ENCODE measurements at regions of chr10 and their contacts with region 1.

Region 1: GRCh38 chr10:72079356-72079755 is 9.0 kb downstream of the SPOCK2 start:
- DNase-seq: peak in 1 of 2 experiments; percentile 25
- H3K4me3 ChIP-seq: no peak overlapping the region
- H3K27ac ChIP-seq: peak overlapping the region; percentile 86
- H3K4me1 ChIP-seq: peaks cover 54% of the 10 kb centered on the region
- H3K27me3 ChIP-seq: no peaks in the 10 kb centered on the region
- CTCF ChIP-seq: no peak

Region 2: GRCh38 chr10:71766702-71767419 is 312.5 kb before region 1 on chr10:
- CTCF ChIA-PET with region 1: no interaction called
- POLR2A ChIA-PET with region 1: no interaction called
- intact Hi-C with region 1: loop called (anchors 1 kb)
- DNase-seq: peak; percentile 95 to 99
- H3K4me3 ChIP-seq: peak overlapping the region; percentile 28; the same call in 1 of the 2 replicates
- H3K27ac ChIP-seq: peak overlapping the region; percentile 88
- H3K4me1 ChIP-seq: peaks cover 91% of the 10 kb centered on the region
- H3K27me3 ChIP-seq: no peaks in the 10 kb centered on the region
- CTCF ChIP-seq: no peak

Region 3: GRCh38 chr10:71963756-71964668 is 115.3 kb before region 1 on chr10 and contains the start of gene CHST3:
- CTCF ChIA-PET with region 1: interaction called, 11 read pairs
- POLR2A ChIA-PET with region 1: no interaction called
- intact Hi-C with region 1: no loop called
- DNase-seq: peak in 1 of 2 experiments; percentile 58
- H3K4me3 ChIP-seq: peak within 1 kb of the TSS; percentile 74
- H3K27ac ChIP-seq: no peak within 1 kb of the TSS
- H3K4me1 ChIP-seq: peaks cover 41% of the 10 kb centered on the region
- H3K27me3 ChIP-seq: no peaks in the 10 kb centered on the region
- CTCF ChIP-seq: no peak
- total RNA-seq, gene CHST3: 21.3 and 23.3 TPM in 2 replicates

Region 4: DNA sequence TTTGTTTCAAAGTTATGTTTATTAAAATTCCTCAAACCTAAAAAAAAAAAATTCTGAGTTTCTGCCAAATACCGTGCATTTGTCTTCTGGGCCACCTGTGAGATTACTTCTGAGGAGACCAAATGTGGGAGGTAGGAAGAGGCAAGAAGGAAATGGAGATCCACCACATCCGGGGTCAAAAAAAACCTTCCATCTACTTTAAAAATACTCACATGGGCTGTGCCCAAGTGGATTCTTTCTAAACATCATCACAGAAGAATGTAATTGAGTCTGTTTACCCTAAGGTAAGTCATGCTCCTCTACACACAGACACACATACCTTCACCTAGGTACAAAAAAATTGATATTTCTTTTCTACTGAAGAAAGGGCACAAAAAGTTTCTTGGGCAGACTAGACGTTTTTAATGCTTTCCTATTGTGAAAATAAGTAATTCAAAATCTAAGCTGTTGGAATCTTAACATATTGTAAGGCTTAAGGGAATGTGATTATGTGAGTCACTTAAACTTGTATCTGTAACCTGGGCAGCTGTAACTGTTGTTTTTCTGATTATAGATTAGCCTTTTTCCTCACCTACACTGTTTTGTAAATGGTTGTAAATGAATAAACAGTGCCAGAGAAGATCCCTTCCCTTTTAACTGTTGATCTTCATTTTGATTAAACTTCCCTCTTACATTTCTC is 28.1 kb after region 1 on chr10:
- CTCF ChIA-PET with region 1: no interaction called
- POLR2A ChIA-PET with region 1: interaction called, 4 read pairs
- intact Hi-C with region 1: loop called (anchors 1 kb)
- DNase-seq: peak; percentile 68 to 98
- H3K4me3 ChIP-seq: peak overlapping the region; percentile 10; the same call in 1 of the 2 replicates
- H3K27ac ChIP-seq: peak overlapping the region; percentile 88
- H3K4me1 ChIP-seq: peaks cover 60% of the 10 kb centered on the region
- H3K27me3 ChIP-seq: no peaks in the 10 kb centered on the region
- CTCF ChIP-seq: no peak

Region 5: GRCh38 chr10:72173635-72174296 is 94.4 kb after region 1 on chr10:
- CTCF ChIA-PET with region 1: interaction called, 6 read pairs
- POLR2A ChIA-PET with region 1: no interaction called
- intact Hi-C with region 1: loop called (anchors 1 kb)
- DNase-seq: peak in 1 of 2 experiments; percentile 48
- H3K4me3 ChIP-seq: no peak overlapping the region
- H3K27ac ChIP-seq: peak overlapping the region; percentile 43
- H3K4me1 ChIP-seq: peaks cover 61% of the 10 kb centered on the region
- H3K27me3 ChIP-seq: no peaks in the 10 kb centered on the region
- CTCF ChIP-seq: no peak

Region 6: GRCh38 chr10:72260588-72261322 is 181.4 kb after region 1 on chr10:
- CTCF ChIA-PET with region 1: no interaction called
- POLR2A ChIA-PET with region 1: no interaction called
- intact Hi-C with region 1: loop called (anchors 2 kb)
- DNase-seq: peak; percentile 97 to 98
- H3K4me3 ChIP-seq: peak overlapping the region; percentile 63
- H3K27ac ChIP-seq: peak overlapping the region; percentile 97
- H3K4me1 ChIP-seq: peaks cover 76% of the 10 kb centered on the region
- H3K27me3 ChIP-seq: no peaks in the 10 kb centered on the region
- CTCF ChIP-seq: no peak

Region 7: DNA sequence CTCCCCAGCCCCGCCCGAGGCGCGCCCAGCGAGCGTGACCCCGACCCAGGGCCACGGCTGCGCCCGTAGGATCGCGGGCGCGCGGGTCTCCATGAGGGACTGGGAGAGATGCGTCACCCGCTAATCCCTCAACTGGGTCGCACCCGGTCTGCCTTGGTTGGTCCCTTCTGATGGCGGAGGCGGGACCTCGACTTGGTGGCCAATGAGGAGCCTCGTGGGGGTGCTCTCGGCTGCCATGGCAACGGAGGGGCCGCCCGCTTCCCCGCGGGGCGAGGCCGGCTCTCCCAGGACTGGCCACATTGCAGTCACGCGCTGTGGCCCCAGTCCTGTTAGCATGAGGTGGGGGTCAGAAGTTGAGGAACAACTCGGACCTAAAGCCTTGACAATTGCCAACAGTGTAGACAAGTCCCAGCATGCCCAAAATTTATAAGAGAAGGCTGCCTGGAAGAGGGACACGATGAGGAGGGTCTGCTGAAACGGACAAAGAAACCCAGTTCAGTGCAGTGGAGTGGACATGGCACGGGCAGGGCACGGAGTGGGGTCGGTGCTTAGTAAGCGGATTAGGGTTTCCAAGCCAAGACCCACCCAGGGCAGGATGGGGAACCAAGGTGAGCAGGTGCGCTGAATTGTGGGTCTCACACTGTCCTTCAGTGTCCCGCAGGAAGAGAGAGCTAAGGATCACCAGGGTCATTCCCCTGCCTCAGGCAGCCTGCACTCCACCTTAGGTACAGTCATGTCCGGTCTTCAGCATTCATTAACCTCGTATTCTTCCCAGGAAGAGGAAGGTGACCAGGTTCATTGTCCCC is 218.8 kb after region 1 on chr10:
- CTCF ChIA-PET with region 1: interaction called, 11 read pairs
- POLR2A ChIA-PET with region 1: no interaction called
- intact Hi-C with region 1: no loop called
- DNase-seq: peak; percentile 95 to 98
- H3K4me3 ChIP-seq: peak overlapping the region; percentile 66
- H3K27ac ChIP-seq: peak overlapping the region; percentile 89
- H3K4me1 ChIP-seq: peaks cover 42% of the 10 kb centered on the region
- H3K27me3 ChIP-seq: no peaks in the 10 kb centered on the region
- CTCF ChIP-seq: no peak

Measured in PC-9 (cell line).